PC-9 (cell line): ENCODE measurements at regions of chr1 and their contacts with region 1.

Region 1: GRCh38 chr1:65254319-65255034 is 54.9 kb upstream of the DNAJC6 start:
- DNase-seq: peak; percentile 61 to 88
- H3K4me3 ChIP-seq: peak overlapping the region; percentile 70
- H3K27ac ChIP-seq: 0 out of 2 replicates have a peak overlapping the region, but pooled peaks have one; percentile 10
- H3K4me1 ChIP-seq: peaks cover 11% of the 10 kb centered on the region; the same call in 1 of the 2 replicates
- H3K27me3 ChIP-seq: no peaks in the 10 kb centered on the region
- CTCF ChIP-seq: no peak

Region 2: DNA sequence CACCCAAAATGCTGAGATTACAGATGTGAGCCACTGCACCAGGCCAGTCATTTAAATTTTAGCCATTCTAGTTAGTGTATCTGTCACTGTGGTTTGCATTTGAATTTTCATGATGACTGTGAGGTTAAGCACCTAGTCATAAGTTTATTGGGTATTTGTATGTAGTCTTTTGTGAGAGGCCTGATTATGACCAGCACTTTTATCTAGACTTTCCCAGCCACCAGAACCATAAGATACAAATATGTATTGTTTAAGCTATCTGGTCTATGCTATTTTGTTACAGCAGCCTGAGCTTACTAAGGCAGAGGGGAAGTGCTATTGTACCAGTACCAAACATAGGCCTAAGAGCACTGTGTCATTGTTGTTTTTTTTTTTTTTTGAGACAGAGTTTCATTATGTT is 35.0 kb after region 1 on chr1:
- CTCF ChIA-PET with region 1: no interaction called
- POLR2A ChIA-PET with region 1: no interaction called
- intact Hi-C with region 1: no loop called
- DNase-seq: no peak
- H3K4me3 ChIP-seq: no peak overlapping the region
- H3K27ac ChIP-seq: no peak overlapping the region
- H3K4me1 ChIP-seq: no peaks in the 10 kb centered on the region
- H3K27me3 ChIP-seq: no peaks in the 10 kb centered on the region
- CTCF ChIP-seq: no peak

Region 3: GRCh38 chr1:65309304-65310077 is 55.0 kb after region 1 on chr1 and contains the start of gene DNAJC6:
- CTCF ChIA-PET with region 1: no interaction called
- POLR2A ChIA-PET with region 1: interaction called, 5 read pairs
- intact Hi-C with region 1: loop called (anchors 2 kb)
- DNase-seq: peak; percentile 53 to 80
- H3K4me3 ChIP-seq: peak within 1 kb of the TSS; percentile 58
- H3K27ac ChIP-seq: no peak within 1 kb of the TSS
- H3K4me1 ChIP-seq: no peaks in the 10 kb centered on the region
- H3K27me3 ChIP-seq: no peaks in the 10 kb centered on the region
- CTCF ChIP-seq: no peak
- total RNA-seq, gene DNAJC6: 11.2 and 15.6 TPM in 2 replicates